ENCODE measurements at regions of chr6 and their contacts with region 1.

Region 1: GRCh38 chr6:139161817-139162284 is 27.0 kb downstream of the HECA start:
- DNase-seq: peak; percentile 77
- ATAC-seq: peak; percentile 72
- H3K4me3 Mint-ChIP-seq: peak overlapping the region; percentile 63
- H3K27ac Mint-ChIP-seq: peak overlapping the region; percentile 98
- H3K4me1 Mint-ChIP-seq: peaks cover 78% of the 10 kb centered on the region
- H3K27me3 Mint-ChIP-seq: no peaks in the 10 kb centered on the region

Region 2: GRCh38 chr6:139149383-139149782 is 12.5 kb before region 1 on chr6:
- CTCF ChIA-PET with region 1: interaction called, 12 read pairs
- POLR2A ChIA-PET with region 1: interaction called, 4 read pairs
- DNase-seq: no peak
- ATAC-seq: no peak
- H3K4me3 Mint-ChIP-seq: no peak overlapping the region
- H3K27ac Mint-ChIP-seq: peak overlapping the region; percentile 63
- H3K4me1 Mint-ChIP-seq: peaks cover 89% of the 10 kb centered on the region
- H3K27me3 Mint-ChIP-seq: no peaks in the 10 kb centered on the region

Region 3: GRCh38 chr6:139173172-139173571 is 11.3 kb after region 1 on chr6:
- CTCF ChIA-PET with region 1: interaction called, 36 read pairs
- POLR2A ChIA-PET with region 1: interaction called, 3 read pairs
- DNase-seq: peak; percentile 48
- ATAC-seq: peak; percentile 74
- H3K4me3 Mint-ChIP-seq: no peak overlapping the region
- H3K27ac Mint-ChIP-seq: peak overlapping the region; percentile 75
- H3K4me1 Mint-ChIP-seq: peaks cover 85% of the 10 kb centered on the region
- H3K27me3 Mint-ChIP-seq: no peaks in the 10 kb centered on the region